Right ventricle myocardium inferior (tissue), 1 donor: ENCODE measurements at regions of chr2 and their contacts with region 1.

Region 1: DNA sequence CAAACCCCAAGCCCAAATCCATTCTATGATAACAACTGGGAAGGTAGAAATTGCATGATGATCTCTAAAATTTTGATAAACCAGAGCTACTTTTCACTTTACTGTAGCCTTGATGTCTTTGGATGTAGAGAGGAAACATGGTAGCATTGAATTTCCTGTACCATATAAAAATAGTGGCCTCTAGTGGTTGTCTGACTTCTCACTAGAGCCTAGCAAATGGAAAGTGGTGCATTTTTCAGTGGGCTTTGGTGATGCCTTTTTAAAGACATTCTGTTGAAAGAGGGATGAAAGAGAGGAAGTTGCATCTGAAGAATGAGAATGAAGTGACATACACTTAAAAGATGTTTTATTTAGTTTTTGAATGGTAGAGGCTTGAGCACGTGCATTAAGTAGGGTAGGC is 662.2 kb downstream of the XIRP2 start:
- DNase-seq: no peak
- ATAC-seq: no peak

Region 2: GRCh38 chr2:167264380-167264779 is 286.1 kb before region 1 on chr2:
- intact Hi-C with region 1: loop called (anchors 10 kb)
- DNase-seq: no peak
- ATAC-seq: peak; percentile 50

Region 3: DNA sequence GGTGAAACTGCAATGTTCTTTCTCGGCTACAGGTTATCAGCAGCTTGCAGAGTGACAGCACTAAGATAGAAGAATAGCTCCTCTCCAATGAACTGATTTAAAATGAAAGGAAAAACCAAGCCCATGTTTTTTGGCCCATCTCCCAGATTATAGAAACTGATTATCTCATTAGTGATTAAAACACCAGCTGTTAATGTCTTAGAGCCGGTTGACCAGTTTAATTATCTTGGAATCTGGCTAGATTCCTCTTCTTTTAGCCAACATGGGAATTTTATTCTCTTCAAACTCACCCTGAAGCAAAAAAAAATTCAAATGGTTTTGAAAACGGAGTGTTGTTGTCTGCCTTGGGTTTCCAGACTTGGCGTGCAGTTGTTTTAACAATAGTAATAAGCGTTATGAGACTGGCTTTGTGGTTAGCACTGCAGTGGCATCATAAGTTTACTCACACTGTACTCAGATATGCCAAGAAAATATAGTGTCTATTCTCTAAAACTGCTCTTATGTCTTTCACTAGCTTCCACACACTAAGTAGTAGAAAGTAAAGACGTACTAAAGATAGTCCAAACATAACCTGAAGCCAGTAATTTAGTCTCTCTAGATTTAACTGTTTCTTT is 31.6 kb after region 1 on chr2:
- intact Hi-C with region 1: no loop called
- DNase-seq: no peak
- ATAC-seq: no peak